ENCODE measurements at regions of chr11 and their contacts with region 1.

Region 1: GRCh38 chr11:14300661-14301304 is 58.2 kb downstream of the RRAS2 start:
- DNase-seq: peak; percentile 75
- H3K4me3 ChIP-seq: no peak overlapping the region
- H3K27ac ChIP-seq: no peak overlapping the region
- H3K4me1 ChIP-seq: peaks cover 11% of the 10 kb centered on the region
- H3K27me3 ChIP-seq: no peaks in the 10 kb centered on the region
- CTCF ChIP-seq: peak; percentile 76

Region 2: GRCh38 chr11:14454861-14455632 is 154.3 kb after region 1 on chr11:
- CTCF ChIA-PET with region 1: interaction called, 48 read pairs
- POLR2A ChIA-PET with region 1: no interaction called
- intact Hi-C with region 1: loop called (anchors 2 kb)
- DNase-seq: peak; percentile 42
- H3K4me3 ChIP-seq: no peak overlapping the region
- H3K27ac ChIP-seq: no peak overlapping the region
- H3K4me1 ChIP-seq: no peaks in the 10 kb centered on the region
- H3K27me3 ChIP-seq: no peaks in the 10 kb centered on the region
- CTCF ChIP-seq: peak; percentile 74

Measured in A673 (cell line).